ENCODE measurements at regions of chr6 and their contacts with region 1.

Region 1: GRCh38 chr6:121849477-121849876 is 414.0 kb downstream of the GJA1 start:
- DNase-seq: peak; percentile 54
- H3K4me3 Mint-ChIP-seq: no peak overlapping the region
- H3K27ac Mint-ChIP-seq: no peak overlapping the region
- H3K4me1 Mint-ChIP-seq: peaks cover 7% of the 10 kb centered on the region
- H3K27me3 Mint-ChIP-seq: peaks cover 5% of the 10 kb centered on the region

Region 2: GRCh38 chr6:121319112-121319553 is 530.3 kb before region 1 on chr6:
- CTCF ChIA-PET with region 1: interaction called, 3 read pairs
- intact Hi-C with region 1: loop called (anchors 10 kb)
- DNase-seq: no peak
- H3K4me3 Mint-ChIP-seq: no peak overlapping the region
- H3K27ac Mint-ChIP-seq: no peak overlapping the region
- H3K4me1 Mint-ChIP-seq: peaks cover 22% of the 10 kb centered on the region
- H3K27me3 Mint-ChIP-seq: no peaks in the 10 kb centered on the region

Region 3: GRCh38 chr6:121430514-121431460 is 418.7 kb before region 1 on chr6:
- CTCF ChIA-PET with region 1: interaction called, 15 read pairs
- intact Hi-C with region 1: loop called (anchors 1 kb)
- DNase-seq: no peak
- H3K4me3 Mint-ChIP-seq: no peak overlapping the region
- H3K27ac Mint-ChIP-seq: no peak overlapping the region
- H3K4me1 Mint-ChIP-seq: peaks cover 3% of the 10 kb centered on the region
- H3K27me3 Mint-ChIP-seq: no peaks in the 10 kb centered on the region

Region 4: DNA sequence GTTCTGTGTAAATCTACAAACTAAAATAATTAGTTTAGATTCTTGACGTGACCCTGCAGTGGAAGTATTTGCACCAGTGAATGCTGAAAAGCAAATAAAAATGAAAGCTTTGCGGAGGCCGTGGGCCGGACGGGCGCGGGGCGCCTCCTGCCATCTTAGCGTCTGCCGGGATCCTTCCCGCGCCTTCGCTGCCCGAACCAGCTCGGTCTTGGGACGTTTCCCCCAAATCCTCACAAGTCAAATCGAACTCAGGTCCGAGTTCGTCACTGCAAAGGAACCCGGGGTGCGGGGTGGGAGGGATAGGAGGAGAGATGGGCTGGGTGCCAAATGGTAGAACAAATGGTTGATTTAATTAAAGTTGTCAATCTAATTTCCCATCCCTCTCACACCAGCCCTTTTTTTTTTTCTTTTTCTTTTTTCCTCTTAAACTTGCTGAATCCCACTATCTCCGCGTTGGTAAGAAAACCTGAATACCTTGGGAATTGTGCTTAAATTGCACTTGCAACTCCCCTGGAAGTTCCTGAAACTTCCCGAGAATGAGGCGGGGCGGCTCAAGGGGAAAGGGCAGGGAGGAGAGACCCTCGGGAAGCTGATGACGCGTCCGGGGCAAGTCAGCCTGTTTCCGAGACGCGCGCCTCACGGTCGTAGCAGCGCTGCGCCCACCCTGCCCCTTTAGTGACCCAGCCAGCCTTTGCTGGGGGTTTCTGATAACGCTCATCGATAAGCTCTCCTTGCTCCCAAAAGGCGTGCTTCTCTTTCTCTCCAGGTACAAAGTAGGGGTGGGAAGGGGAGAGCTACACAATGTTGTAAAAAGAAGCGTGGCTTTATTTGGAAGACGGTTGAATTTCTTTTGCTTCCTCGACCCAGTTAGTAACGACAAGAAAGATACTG is 412.3 kb before region 1 on chr6:
- CTCF ChIA-PET with region 1: interaction called, 15 read pairs
- intact Hi-C with region 1: no loop called
- DNase-seq: peak; percentile 28
- H3K4me3 Mint-ChIP-seq: peak overlapping the region; percentile 75
- H3K27ac Mint-ChIP-seq: no peak overlapping the region
- H3K4me1 Mint-ChIP-seq: peaks cover 19% of the 10 kb centered on the region
- H3K27me3 Mint-ChIP-seq: peaks cover 13% of the 10 kb centered on the region

Region 5: DNA sequence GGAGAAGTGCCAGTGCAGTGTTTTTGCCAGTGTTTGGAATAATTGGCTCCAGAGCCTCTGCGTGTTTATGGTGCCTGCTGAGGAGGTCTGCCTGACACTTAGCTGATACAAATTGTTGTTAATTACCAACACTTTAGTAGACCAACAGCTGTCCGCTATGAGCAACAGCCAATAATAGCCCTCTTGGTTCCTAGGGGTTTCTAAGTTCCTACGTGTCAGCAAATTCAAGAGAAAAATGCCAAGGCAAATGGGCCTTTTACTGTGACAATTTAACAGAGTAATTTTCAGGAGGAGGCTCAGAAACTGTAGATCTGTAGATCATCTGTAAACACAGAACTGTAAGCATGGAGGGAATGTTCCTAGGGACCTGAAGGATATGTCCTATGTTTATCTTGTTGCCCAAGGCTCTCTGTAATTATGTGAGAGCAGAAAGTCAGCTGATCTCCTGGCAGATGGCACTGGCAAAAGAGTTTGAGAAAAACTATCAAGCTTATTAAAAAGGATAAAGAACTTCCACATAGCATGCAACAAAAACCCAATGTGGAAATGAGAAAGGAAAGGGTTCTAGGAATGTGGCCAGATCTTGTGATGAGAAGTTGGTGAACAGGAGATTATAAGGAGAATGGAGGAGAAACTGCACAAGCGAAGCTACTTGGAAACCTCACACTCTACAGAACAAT is 256.3 kb before region 1 on chr6:
- CTCF ChIA-PET with region 1: no interaction called
- intact Hi-C with region 1: loop called (anchors 10 kb)
- DNase-seq: no peak
- H3K4me3 Mint-ChIP-seq: no peak overlapping the region
- H3K27ac Mint-ChIP-seq: no peak overlapping the region
- H3K4me1 Mint-ChIP-seq: no peaks in the 10 kb centered on the region
- H3K27me3 Mint-ChIP-seq: no peaks in the 10 kb centered on the region

Region 6: GRCh38 chr6:122098201-122098678 is 248.8 kb after region 1 on chr6:
- CTCF ChIA-PET with region 1: no interaction called
- intact Hi-C with region 1: no loop called
- DNase-seq: no peak
- H3K4me3 Mint-ChIP-seq: no peak overlapping the region
- H3K27ac Mint-ChIP-seq: no peak overlapping the region
- H3K4me1 Mint-ChIP-seq: no peaks in the 10 kb centered on the region
- H3K27me3 Mint-ChIP-seq: peaks cover 11% of the 10 kb centered on the region

Region 7: GRCh38 chr6:122202576-122203137 is 353.2 kb after region 1 on chr6:
- CTCF ChIA-PET with region 1: no interaction called
- intact Hi-C with region 1: no loop called
- DNase-seq: no peak
- H3K4me3 Mint-ChIP-seq: no peak overlapping the region
- H3K27ac Mint-ChIP-seq: no peak overlapping the region
- H3K4me1 Mint-ChIP-seq: no peaks in the 10 kb centered on the region
- H3K27me3 Mint-ChIP-seq: peaks cover 4% of the 10 kb centered on the region

Measured in activated naive CD4-positive, alpha-beta T cell treated with anti-CD3 and anti-CD28 coated beads for 36 hours (primary cell).